Thyroid gland (tissue), 4 donors: ENCODE measurements at regions of chr1 and their contacts with region 1.

Region 1: DNA sequence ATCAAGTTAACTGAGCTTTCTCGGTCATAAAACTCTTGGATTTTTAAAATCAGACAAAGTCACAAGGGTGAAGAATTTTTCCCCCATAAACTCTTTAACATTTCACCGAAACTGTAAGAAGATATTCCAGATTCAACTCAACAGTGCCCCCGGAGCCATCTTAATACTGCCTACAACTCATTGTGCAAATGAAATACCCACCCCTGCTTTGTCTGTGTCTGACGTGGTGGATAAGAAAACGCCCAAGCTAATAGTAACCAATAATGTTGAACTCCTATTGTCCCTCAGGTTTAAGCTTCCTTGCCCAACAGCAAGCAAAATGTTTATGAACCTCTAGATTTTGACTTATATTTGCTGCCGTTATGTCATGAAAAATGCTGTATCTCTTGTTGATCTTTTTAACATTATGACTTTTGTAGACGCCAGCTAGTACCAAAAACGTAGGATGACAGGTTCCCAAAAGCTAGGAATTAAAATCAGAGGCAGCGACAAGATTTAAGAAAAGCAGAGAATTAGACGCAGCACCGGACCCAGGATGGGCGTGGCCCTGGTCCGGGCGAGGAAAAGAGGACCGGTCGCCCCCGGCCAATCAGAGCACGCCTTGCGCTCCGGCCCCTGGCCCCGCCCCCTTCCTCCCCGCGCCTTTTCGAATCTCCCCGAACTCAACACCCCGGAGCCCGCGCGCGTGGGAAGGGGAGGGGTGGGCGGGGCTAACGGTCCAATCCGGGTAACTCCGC is 1.1 kb downstream of the STMN1 start:
- DNase-seq: peak; percentile 94 to 95
- H3K4me3 ChIP-seq: peak overlapping the region; percentile 41 to 70 (median 53)
- H3K27ac ChIP-seq: peak overlapping the region in 1 of 3 donors; percentile 35
- H3K4me1 ChIP-seq: peaks cover 7 to 15% of the 10 kb centered on the region in 2 donors
- H3K27me3 ChIP-seq: no peaks in the 10 kb centered on the region
- CTCF ChIP-seq: no peak
- POLR2A ChIP-seq: no peak

Region 2: DNA sequence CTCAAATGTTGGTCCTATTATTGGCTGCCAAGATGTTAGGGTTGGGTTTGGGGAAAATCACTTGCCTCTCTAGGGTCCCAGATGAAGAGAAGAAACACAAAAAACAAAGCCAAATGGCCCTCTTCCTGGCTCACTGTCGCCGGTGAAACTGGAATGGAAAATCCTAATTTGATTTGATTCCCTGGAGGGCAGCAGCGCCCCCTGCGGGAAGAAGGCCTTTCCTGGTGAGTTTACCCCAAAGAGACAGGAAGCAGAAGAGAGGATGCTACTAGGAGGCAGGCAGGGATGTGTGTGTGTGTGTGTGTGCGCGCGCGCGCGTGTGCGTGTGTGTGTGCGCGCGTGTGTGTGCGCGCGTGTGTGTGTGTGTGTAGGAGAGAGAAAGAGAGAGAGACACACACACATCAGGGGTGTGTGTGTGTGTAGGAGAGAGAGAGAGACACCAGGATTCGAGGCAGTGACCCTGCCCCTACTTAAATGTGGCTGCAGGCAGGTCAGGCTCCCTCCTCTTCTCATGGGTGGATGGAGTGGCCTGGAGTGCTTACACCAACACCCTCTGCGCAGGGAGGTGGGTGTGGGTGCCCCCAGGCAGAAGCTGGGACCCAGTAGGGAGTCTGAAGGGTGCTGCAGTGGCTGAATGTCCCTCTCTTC is 108.2 kb before region 1 on chr1:
- intact Hi-C with region 1: no loop called
- DNase-seq: peak; percentile 87 to 94
- H3K4me3 ChIP-seq: no peak overlapping the region
- H3K27ac ChIP-seq: peak overlapping the region; percentile 69 to 86 (median 72)
- H3K4me1 ChIP-seq: peaks cover 17 to 34% of the 10 kb centered on the region in 2 donors
- H3K27me3 ChIP-seq: no peaks in the 10 kb centered on the region
- CTCF ChIP-seq: peak in 5 of 6 experiments; percentile 72 to 97 (median 88)
- POLR2A ChIP-seq: no peak

Region 3: DNA sequence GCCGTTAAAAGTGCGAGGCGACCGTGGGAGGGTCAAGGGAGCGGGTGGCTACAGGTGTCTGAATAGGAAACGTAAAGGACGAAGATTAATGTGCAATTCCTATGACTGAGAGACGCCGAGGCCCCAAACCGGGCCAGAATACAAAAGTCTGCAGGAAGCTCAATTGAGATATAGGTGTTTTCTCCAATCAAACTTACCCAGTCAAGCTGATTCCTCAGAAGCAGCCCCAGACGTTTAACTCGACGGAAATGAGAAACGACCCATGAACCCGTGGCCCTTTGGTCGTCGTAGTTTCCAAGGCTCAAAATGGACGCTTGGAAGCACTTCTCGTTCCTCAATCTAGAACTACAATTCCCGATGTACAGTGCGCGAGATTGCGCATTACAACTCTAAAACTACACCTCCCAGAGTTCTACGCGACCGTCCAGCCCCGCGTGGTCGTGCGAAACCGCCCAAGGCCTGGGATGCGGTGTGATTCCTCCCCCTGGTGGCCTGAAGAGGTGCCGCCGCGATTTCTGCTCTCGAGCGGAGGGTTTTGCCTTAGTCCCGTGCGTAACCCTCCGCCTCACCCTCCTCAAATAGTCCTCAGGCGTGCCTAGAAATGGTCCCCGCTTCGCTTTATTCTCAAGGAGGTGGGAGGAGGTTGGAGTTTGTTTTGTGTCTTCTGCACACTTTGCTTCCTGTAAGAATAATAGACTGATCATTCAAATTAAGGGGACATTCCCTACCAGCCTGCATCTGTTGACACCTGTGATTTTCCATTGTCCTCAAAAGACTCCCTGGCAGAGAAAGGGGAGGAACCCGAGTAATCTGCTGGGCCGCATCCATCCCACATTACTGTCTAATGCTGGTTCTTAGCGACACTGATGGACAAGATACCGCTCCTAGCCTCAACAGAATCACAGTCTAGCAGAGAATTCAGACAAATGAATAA is 93.0 kb after region 1 on chr1 and contains the start of gene PAFAH2:
- intact Hi-C with region 1: loop called (anchors 5 kb)
- DNase-seq: peak; percentile 97 to 99
- H3K4me3 ChIP-seq: peak within 1 kb of the TSS; percentile 1 to 70 (median 69)
- H3K27ac ChIP-seq: peak within 1 kb of the TSS; percentile 34 to 88 (median 83)
- H3K4me1 ChIP-seq: peaks cover 9 to 13% of the 10 kb centered on the region in 2 donors
- H3K27me3 ChIP-seq: no peaks in the 10 kb centered on the region
- CTCF ChIP-seq: peak; percentile 64 to 100 (median 97)
- POLR2A ChIP-seq: peak in 1 of 2 donors; percentile 65
- total RNA-seq, gene PAFAH2: 22.5 to 35.4 (median 30.7) TPM

Region 4: DNA sequence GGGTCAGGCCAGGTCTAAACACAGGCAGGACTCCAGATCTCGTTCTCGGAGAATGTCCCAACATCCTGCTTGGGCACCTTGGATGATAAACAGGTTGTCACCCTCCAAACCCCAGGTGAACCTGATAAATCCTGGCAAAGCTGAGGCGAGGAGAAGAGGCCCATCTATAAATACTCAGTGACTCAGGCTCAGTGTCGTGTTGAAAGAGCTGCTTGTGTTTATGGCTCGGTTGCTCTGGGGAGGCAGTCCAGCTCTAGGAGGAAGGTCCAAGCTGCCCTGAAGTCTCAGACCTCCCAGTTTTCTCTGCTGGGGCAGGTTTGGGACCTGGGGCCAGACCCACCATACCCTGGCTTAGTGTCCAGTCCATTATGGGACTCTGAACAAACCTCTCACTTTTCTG is 178.1 kb after region 1 on chr1:
- intact Hi-C with region 1: no loop called
- DNase-seq: no peak
- H3K4me3 ChIP-seq: no peak overlapping the region
- H3K27ac ChIP-seq: no peak overlapping the region
- H3K4me1 ChIP-seq: peaks cover 7 to 10% of the 10 kb centered on the region in 2 donors
- H3K27me3 ChIP-seq: no peaks in the 10 kb centered on the region
- CTCF ChIP-seq: no peak
- POLR2A ChIP-seq: no peak